GM18951 (cell line): ENCODE measurements at regions of chr6 and their contacts with region 1.

Region 1: GRCh38 chr6:12289933-12290820 is at the start of gene EDN1:
- POLR2A ChIP-seq: peak; percentile 64

Region 2: DNA sequence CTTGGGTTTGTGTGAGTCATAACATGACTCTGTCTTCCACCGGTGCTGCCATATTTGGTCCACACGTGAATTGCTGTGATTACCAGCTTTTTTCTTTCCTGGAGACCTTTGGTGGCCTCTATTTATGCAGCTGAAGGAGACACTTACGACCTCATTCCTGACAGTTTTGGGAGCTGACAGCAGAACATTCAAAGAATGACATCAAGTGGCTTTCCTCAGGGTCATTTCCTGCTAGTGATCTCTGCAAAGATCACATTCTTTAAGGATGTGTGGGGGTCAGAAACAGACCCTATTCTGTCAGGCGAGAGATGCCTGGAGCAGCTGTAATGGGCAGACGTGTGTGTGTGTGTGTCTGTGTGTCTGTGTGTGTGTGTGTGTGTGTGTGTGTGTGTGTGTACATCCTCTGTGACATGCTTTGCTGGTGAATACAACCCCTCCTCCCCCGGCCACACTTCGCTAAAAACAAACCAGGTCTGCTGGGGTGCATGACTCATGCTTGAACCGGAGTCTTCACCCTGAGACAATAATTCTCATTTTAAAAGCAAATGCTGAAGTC is 637.1 kb before region 1 on chr6:
- in situ Hi-C with region 1: loop called (anchors 10 kb)
- POLR2A ChIP-seq: no peak

Region 3: DNA sequence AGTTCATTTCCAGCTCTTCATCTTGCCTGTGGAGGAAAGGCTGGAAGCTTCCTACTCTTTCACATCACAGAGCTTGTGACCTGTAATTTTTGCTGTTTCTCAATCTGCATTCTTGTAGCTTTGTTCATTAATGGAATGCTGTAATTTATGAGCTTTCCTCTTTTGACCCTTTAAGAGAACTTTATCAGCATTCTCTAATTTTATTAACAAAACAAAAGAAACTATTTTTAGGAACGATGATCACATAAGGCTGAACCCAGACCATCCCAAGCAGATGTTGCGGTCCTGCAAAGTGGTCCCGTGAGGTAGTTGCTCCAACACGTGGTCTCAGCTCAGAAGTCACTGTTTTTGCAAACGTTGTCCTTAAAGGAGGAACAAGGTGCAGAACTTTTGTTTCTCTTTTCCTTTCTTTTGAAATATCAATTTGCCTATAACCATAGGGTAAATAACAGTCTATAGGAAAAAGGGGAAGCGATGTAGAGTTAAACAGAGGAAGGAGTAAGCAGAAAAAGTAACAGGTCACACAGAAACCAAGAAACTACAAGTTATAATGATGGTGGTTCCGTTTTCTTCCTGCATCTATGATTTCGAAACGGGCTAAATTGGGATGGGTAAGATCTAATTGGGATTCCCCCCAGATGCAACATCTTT is 305.1 kb after region 1 on chr6:
- in situ Hi-C with region 1: loop called (anchors 10 kb)
- POLR2A ChIP-seq: no peak